RWPE1 (cell line): ENCODE measurements at regions of chr1 and their contacts with region 1.

Region 1: GRCh38 chr1:196628838-196629237 is 20.6 kb upstream of the KCNT2 start:
- DNase-seq: no peak
- H3K27ac ChIP-seq: no peak overlapping the region
- CTCF ChIP-seq: no peak

Region 2: GRCh38 chr1:195345146-195345545 is 1283.7 kb before region 1 on chr1:
- CTCF ChIA-PET with region 1: interaction called, 10 read pairs
- POLR2A ChIA-PET with region 1: no interaction called
- DNase-seq: no peak
- H3K27ac ChIP-seq: no peak overlapping the region
- CTCF ChIP-seq: no peak